CD4-positive, alpha-beta memory T cell (primary cell): ENCODE measurements at regions of chr2 and their contacts with region 1.

Region 1: GRCh38 chr2:225002039-225002655 is 40.1 kb downstream of the DOCK10 start:
- DNase-seq: peak; percentile 67 to 77 (median 69)
- H3K4me3 ChIP-seq: no peak overlapping the region
- H3K4me3 Mint-ChIP-seq: peak overlapping the region in 5 of 8 donors; percentile 35 to 64 (median 48)
- H3K27ac ChIP-seq: peak overlapping the region; percentile 34
- H3K27ac Mint-ChIP-seq: peak overlapping the region; percentile 57 to 85 (median 75)
- H3K4me1 ChIP-seq: peaks cover 71% of the 10 kb centered on the region
- H3K4me1 Mint-ChIP-seq: peaks cover 46 to 93% (median 80%) of the 10 kb centered on the region in 4 donors
- H3K27me3 ChIP-seq: no peaks in the 10 kb centered on the region
- H3K27me3 Mint-ChIP-seq: no peaks in the 10 kb centered on the region

Region 2: DNA sequence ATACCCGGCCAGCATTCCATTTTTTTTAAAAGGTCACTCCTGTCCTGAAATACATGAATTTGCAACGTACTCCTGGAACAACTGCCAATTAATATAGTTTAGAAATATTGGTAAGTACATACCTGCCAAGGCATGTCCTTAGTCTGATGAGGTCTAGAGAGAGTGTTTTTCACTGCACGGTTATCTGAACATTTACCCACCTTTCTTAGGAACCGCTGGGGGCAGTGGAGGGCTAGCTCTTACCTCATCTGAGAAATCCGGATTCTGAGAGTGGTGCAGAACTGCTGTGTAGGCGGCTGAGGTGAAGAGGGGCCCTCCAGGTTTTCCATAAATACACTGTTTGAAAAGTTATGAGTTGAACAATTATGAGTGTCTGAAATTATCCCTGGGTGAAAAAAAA is 152.9 kb before region 1 on chr2:
- CTCF ChIA-PET with region 1: interaction called, 7 read pairs
- POLR2A ChIA-PET with region 1: no interaction called
- intact Hi-C with region 1: loop called (anchors 10 kb)
- DNase-seq: no peak
- H3K4me3 ChIP-seq: no peak overlapping the region
- H3K4me3 Mint-ChIP-seq: no peak overlapping the region
- H3K27ac ChIP-seq: no peak overlapping the region
- H3K27ac Mint-ChIP-seq: peak overlapping the region in 1 of 7 donors; percentile 65
- H3K4me1 ChIP-seq: no peaks in the 10 kb centered on the region
- H3K4me1 Mint-ChIP-seq: peaks cover 0 to 1% (median 0%) of the 10 kb centered on the region in 4 donors
- H3K27me3 ChIP-seq: no peaks in the 10 kb centered on the region
- H3K27me3 Mint-ChIP-seq: no peaks in the 10 kb centered on the region

Region 3: GRCh38 chr2:224909885-224910573 is 92.1 kb before region 1 on chr2:
- CTCF ChIA-PET with region 1: interaction called, 11 read pairs
- POLR2A ChIA-PET with region 1: no interaction called
- intact Hi-C with region 1: no loop called
- DNase-seq: peak in 3 of 5 donors; percentile 43 to 60 (median 46)
- H3K4me3 ChIP-seq: no peak overlapping the region
- H3K4me3 Mint-ChIP-seq: peak overlapping the region in 3 of 8 donors; percentile 4 to 65 (median 35)
- H3K27ac ChIP-seq: no peak overlapping the region
- H3K27ac Mint-ChIP-seq: peak overlapping the region; percentile 37 to 78 (median 73)
- H3K4me1 ChIP-seq: peaks cover 25% of the 10 kb centered on the region
- H3K4me1 Mint-ChIP-seq: peaks cover 38 to 56% (median 48%) of the 10 kb centered on the region in 4 donors
- H3K27me3 ChIP-seq: no peaks in the 10 kb centered on the region
- H3K27me3 Mint-ChIP-seq: no peaks in the 10 kb centered on the region

Region 4: GRCh38 chr2:224946895-224947294 is 55.3 kb before region 1 on chr2:
- CTCF ChIA-PET with region 1: interaction called, 20 read pairs
- POLR2A ChIA-PET with region 1: interaction called, 4 read pairs
- intact Hi-C with region 1: loop called (anchors 2 kb)
- DNase-seq: peak; percentile 59 to 75 (median 66)
- H3K4me3 ChIP-seq: peak overlapping the region; percentile 59 to 64
- H3K4me3 Mint-ChIP-seq: peak overlapping the region; percentile 84 to 95 (median 92)
- H3K27ac ChIP-seq: peak overlapping the region; percentile 75
- H3K27ac Mint-ChIP-seq: peak overlapping the region; percentile 89 to 98 (median 94)
- H3K4me1 ChIP-seq: peaks cover 81% of the 10 kb centered on the region
- H3K4me1 Mint-ChIP-seq: peaks cover 55 to 85% (median 72%) of the 10 kb centered on the region in 4 donors
- H3K27me3 ChIP-seq: no peaks in the 10 kb centered on the region
- H3K27me3 Mint-ChIP-seq: no peaks in the 10 kb centered on the region

Region 5: GRCh38 chr2:225091336-225091735 is 89.2 kb after region 1 on chr2:
- CTCF ChIA-PET with region 1: no interaction called
- POLR2A ChIA-PET with region 1: no interaction called
- intact Hi-C with region 1: no loop called
- DNase-seq: no peak
- H3K4me3 ChIP-seq: no peak overlapping the region
- H3K4me3 Mint-ChIP-seq: no peak overlapping the region
- H3K27ac ChIP-seq: no peak overlapping the region
- H3K27ac Mint-ChIP-seq: no peak overlapping the region
- H3K4me1 ChIP-seq: no peaks in the 10 kb centered on the region
- H3K4me1 Mint-ChIP-seq: peaks cover 0 to 8% (median 2%) of the 10 kb centered on the region in 4 donors
- H3K27me3 ChIP-seq: no peaks in the 10 kb centered on the region
- H3K27me3 Mint-ChIP-seq: peaks cover 0 to 4% of the 10 kb centered on the region in 2 donors

Region 6: GRCh38 chr2:225122583-225123486 is 120.7 kb after region 1 on chr2:
- CTCF ChIA-PET with region 1: interaction called, 7 read pairs
- POLR2A ChIA-PET with region 1: no interaction called
- intact Hi-C with region 1: loop called (anchors 2 kb)
- DNase-seq: peak in 4 of 5 donors; percentile 3 to 18 (median 12)
- H3K4me3 ChIP-seq: no peak overlapping the region
- H3K4me3 Mint-ChIP-seq: no peak overlapping the region
- H3K27ac ChIP-seq: no peak overlapping the region
- H3K27ac Mint-ChIP-seq: peak overlapping the region in 2 of 7 donors; percentile 17 to 94
- H3K4me1 ChIP-seq: no peaks in the 10 kb centered on the region
- H3K4me1 Mint-ChIP-seq: peaks cover 0 to 4% (median 3%) of the 10 kb centered on the region in 4 donors
- H3K27me3 ChIP-seq: no peaks in the 10 kb centered on the region
- H3K27me3 Mint-ChIP-seq: peaks cover 0 to 9% of the 10 kb centered on the region in 2 donors